CD4-positive, alpha-beta T cell (primary cell): ENCODE measurements at regions of chr10 and their contacts with region 1.

Region 1: DNA sequence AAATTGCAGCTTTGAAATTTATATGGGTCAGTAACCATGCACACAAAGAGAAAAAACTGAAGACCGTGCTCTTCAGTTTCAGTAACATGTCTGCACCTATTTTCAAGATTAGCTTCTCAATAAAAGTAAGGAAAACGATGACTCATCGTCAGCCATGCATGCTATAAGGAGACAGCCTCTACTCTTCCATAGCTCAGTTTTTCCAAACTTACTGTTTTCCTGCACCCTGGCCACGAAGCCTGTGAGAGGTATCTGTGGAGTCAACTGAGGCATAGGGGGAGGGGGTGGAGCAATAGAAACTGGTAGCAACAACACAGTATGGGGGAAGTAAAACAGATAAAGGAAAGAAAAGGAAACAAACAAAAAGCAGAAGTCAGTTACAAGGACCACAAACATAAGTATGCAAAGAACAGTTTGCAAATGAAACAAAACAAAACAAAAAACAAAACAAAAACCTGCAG is 58.0 kb downstream of the PDSS1 start:
- DNase-seq: no peak
- ATAC-seq: no peak
- H3K4me3 ChIP-seq: no peak overlapping the region
- H3K4me3 Mint-ChIP-seq: no peak overlapping the region
- H3K27ac ChIP-seq: no peak overlapping the region
- H3K27ac Mint-ChIP-seq: peak overlapping the region; percentile 43
- H3K4me1 ChIP-seq: no peaks in the 10 kb centered on the region
- H3K4me1 Mint-ChIP-seq: peaks cover 4% of the 10 kb centered on the region
- H3K27me3 ChIP-seq: no peaks in the 10 kb centered on the region
- H3K27me3 Mint-ChIP-seq: no peaks in the 10 kb centered on the region
- CTCF ChIP-seq: no peak

Region 2: GRCh38 chr10:26802527-26802926 is 47.1 kb after region 1 on chr10:
- CTCF ChIA-PET with region 1: no interaction called
- POLR2A ChIA-PET with region 1: no interaction called
- intact Hi-C with region 1: loop called in 1 of 2 experiments (anchors 2 kb)
- DNase-seq: no peak
- ATAC-seq: no peak
- H3K4me3 ChIP-seq: no peak overlapping the region
- H3K4me3 Mint-ChIP-seq: no peak overlapping the region
- H3K27ac ChIP-seq: no peak overlapping the region
- H3K27ac Mint-ChIP-seq: no peak overlapping the region
- H3K4me1 ChIP-seq: peaks cover 36% of the 10 kb centered on the region
- H3K4me1 Mint-ChIP-seq: peaks cover 96% of the 10 kb centered on the region
- H3K27me3 ChIP-seq: no peaks in the 10 kb centered on the region
- H3K27me3 Mint-ChIP-seq: no peaks in the 10 kb centered on the region
- CTCF ChIP-seq: no peak